Stomach (tissue), 19 donors: ENCODE measurements at regions of chr10 and their contacts with region 1.

Region 1: GRCh38 chr10:121974535-121975294 is at the start of gene NSMCE4A:
- DNase-seq: peak; percentile 83 to 93
- H3K4me3 ChIP-seq: peak within 1 kb of the TSS; percentile 73 to 91 (median 85)
- H3K27ac ChIP-seq: peak within 1 kb of the TSS; percentile 95 to 100 (median 99)
- H3K4me1 ChIP-seq: peaks cover 14 to 39% (median 28%) of the 10 kb centered on the region in 4 donors
- H3K27me3 ChIP-seq: no peaks in the 10 kb centered on the region
- CTCF ChIP-seq: peak in 3 of 7 experiments; percentile 15 to 74 (median 22)
- EP300 ChIP-seq: no peak
- POLR2A ChIP-seq: peak in 1 of 4 donors; percentile 21
- total RNA-seq, gene NSMCE4A: 90.6 to 441 (median 110) TPM

Region 2: DNA sequence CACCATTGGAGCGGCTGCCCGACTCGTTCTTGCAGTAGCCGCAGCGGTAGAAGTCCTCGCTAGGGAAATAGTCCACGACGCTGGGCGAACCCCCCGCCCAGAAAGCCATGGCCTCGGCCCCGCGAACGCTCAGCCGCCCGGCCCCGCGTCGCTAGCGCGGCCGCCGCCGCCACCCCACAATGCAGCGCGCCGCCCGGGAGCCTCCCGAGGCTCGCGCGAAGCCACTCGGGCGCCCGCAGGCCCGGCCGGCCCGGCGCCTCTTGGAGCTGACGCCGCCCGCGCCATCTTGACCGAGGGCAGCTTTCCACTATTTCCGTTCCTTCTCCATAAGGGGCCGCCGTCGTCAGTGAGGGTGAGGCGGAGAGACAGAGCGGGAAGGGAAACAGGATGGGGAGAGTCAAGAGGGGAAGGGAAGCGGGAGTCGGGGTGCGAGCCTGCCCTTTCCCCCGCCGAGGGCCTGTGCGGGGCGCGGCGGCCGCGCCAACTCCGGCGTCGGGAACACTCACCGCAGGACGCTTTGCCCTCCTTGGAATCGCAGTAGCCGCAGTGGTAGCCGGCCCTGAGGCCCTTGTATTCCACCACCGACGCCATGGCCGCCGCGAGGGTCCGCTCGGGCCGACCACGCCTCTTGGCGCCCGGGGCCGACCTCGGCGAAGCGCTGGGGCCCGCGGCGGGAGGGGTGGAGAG is 46.7 kb before region 1 on chr10 and contains the start of gene ATE1:
- intact Hi-C with region 1: loop called (anchors 10 kb)
- DNase-seq: peak; percentile 93 to 97
- H3K4me3 ChIP-seq: peak within 1 kb of the TSS; percentile 94 to 98 (median 98)
- H3K27ac ChIP-seq: peak within 1 kb of the TSS; percentile 96 to 100 (median 99)
- H3K4me1 ChIP-seq: peaks cover 21 to 49% (median 27%) of the 10 kb centered on the region in 4 donors
- H3K27me3 ChIP-seq: no peaks in the 10 kb centered on the region
- CTCF ChIP-seq: no peak
- EP300 ChIP-seq: no peak
- POLR2A ChIP-seq: peak in 1 of 4 donors; percentile 74
- total RNA-seq, gene ATE1: 8.8 to 47.4 (median 17.0) TPM

Region 3: GRCh38 chr10:122051251-122051996 is 76.7 kb after region 1 on chr10:
- intact Hi-C with region 1: loop called (anchors 10 kb)
- DNase-seq: peak; percentile 77 to 85
- H3K4me3 ChIP-seq: no peak overlapping the region
- H3K27ac ChIP-seq: peak overlapping the region in 4 of 5 donors; percentile 27 to 66 (median 48)
- H3K4me1 ChIP-seq: peaks cover 8 to 44% (median 19%) of the 10 kb centered on the region in 4 donors
- H3K27me3 ChIP-seq: no peaks in the 10 kb centered on the region
- CTCF ChIP-seq: peak in 5 of 7 experiments; percentile 58 to 74 (median 69)
- EP300 ChIP-seq: no peak
- POLR2A ChIP-seq: no peak